ENCODE measurements at regions of chr2 and their contacts with region 1.

Region 1: GRCh38 chr2:189762551-189763298 is at the start of gene OSGEPL1:
- DNase-seq: peak; percentile 72 to 96 (median 76)
- ATAC-seq: peak; percentile 97
- H3K4me3 ChIP-seq: peak within 1 kb of the TSS; percentile 70
- H3K27ac ChIP-seq: peak within 1 kb of the TSS; percentile 89
- H3K4me1 ChIP-seq: no peaks in the 10 kb centered on the region; a peak in 1 of 5 replicates
- H3K27me3 ChIP-seq: no peaks in the 10 kb centered on the region
- CTCF ChIP-seq: peak; percentile 48 to 56 (median 51); a peak in 5 of 6 replicates
- EP300 ChIP-seq: no peak; the same call in 1 of the 2 replicates
- POLR2A ChIP-seq: peak; percentile 91
- RAD21 ChIP-seq: no peak
- polyA plus RNA-seq, gene OSGEPL1: 8.9 to 9.3 TPM

Region 2: GRCh38 chr2:189783927-189784867 is 21.5 kb after region 1 on chr2 and contains the starts of genes ORMDL1 and PMS1:
- CTCF ChIA-PET with region 1: no interaction called
- POLR2A ChIA-PET with region 1: interaction called, 3 read pairs
- in situ Hi-C with region 1: no loop called
- intact Hi-C with region 1: loop called (anchors 2 kb)
- DNase-seq: peak; percentile 89 to 95 (median 92)
- ATAC-seq: peak; percentile 98
- H3K4me3 ChIP-seq: peak within 1 kb of the TSS; percentile 75
- H3K27ac ChIP-seq: peak within 1 kb of the TSS; percentile 90
- H3K4me1 ChIP-seq: peaks cover 6 to 10% of the 10 kb centered on the region in 2 experiments; a peak in 3 of 5 replicates
- H3K27me3 ChIP-seq: no peaks in the 10 kb centered on the region
- CTCF ChIP-seq: no peak
- EP300 ChIP-seq: no peak
- POLR2A ChIP-seq: peak; percentile 94
- RAD21 ChIP-seq: no peak
- polyA plus RNA-seq, gene ORMDL1: 50.0 to 57.5 TPM
- polyA plus RNA-seq, gene PMS1: 14.5 to 19.9 TPM